Esophagus muscularis mucosa (tissue), 4 donors: ENCODE measurements at regions of chr6 and their contacts with region 1.

Region 1: GRCh38 chr6:73520688-73521350 is at the start of gene EEF1A1:
- DNase-seq: peak; percentile 100
- H3K4me3 ChIP-seq: peak within 1 kb of the TSS; percentile 70 to 96 (median 89)
- H3K27ac ChIP-seq: peak within 1 kb of the TSS; percentile 97 to 98 (median 98)
- H3K4me1 ChIP-seq: peaks cover 35 to 65% (median 58%) of the 10 kb centered on the region in 4 donors
- H3K27me3 ChIP-seq: peaks cover 0 to 5% (median 0%) of the 10 kb centered on the region in 4 donors
- CTCF ChIP-seq: peak in 1 of 3 experiments; percentile 16
- EP300 ChIP-seq: peak; percentile 80
- POLR2A ChIP-seq: peak; percentile 100
- total RNA-seq, gene EEF1A1: 6,828 to 12,822 (median 11,636) TPM

Region 2: DNA sequence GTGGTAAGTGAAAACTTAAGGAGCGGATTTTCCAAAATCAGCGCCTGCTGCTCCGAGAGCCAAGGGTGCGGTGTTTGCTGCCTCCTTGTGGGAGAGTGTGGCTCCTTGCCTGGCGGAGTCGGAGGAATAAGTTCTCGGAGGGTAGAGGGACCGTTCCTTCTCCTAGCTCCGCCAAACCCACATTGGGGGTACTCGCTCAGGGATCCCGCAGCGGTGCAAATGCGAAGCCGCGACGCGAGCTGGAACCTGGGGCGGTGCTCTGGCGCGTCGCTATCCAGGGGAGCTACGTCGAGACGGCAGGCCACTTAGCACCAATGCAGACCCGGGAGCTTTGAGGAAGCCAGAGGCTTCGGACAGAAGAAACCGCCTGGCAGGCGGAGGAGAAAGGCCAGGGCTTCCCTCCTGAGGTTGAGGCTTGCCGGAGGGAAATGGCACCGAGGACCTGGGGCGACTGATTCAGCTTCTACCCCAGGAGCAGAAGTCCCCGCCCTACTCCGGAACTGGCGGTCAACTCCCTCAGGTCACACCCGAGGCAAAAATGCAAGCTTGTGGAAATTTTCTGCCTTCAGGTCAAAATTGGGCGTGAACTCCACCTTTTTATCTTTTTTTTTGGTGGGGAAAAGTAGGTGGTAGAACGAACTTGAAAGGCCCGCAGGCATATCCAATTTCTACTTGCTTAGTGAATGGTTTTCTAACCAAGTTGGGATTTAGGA is 131.9 kb before region 1 on chr6:
- intact Hi-C with region 1: no loop called
- DNase-seq: no peak
- H3K4me3 ChIP-seq: peak overlapping the region; percentile 51 to 64 (median 56)
- H3K27ac ChIP-seq: peak overlapping the region; percentile 42 to 64 (median 48)
- H3K4me1 ChIP-seq: peaks cover 3 to 11% (median 9%) of the 10 kb centered on the region in 4 donors
- H3K27me3 ChIP-seq: no peaks in the 10 kb centered on the region
- CTCF ChIP-seq: peak; percentile 39 to 67 (median 41)
- EP300 ChIP-seq: no peak
- POLR2A ChIP-seq: no peak

Region 3: DNA sequence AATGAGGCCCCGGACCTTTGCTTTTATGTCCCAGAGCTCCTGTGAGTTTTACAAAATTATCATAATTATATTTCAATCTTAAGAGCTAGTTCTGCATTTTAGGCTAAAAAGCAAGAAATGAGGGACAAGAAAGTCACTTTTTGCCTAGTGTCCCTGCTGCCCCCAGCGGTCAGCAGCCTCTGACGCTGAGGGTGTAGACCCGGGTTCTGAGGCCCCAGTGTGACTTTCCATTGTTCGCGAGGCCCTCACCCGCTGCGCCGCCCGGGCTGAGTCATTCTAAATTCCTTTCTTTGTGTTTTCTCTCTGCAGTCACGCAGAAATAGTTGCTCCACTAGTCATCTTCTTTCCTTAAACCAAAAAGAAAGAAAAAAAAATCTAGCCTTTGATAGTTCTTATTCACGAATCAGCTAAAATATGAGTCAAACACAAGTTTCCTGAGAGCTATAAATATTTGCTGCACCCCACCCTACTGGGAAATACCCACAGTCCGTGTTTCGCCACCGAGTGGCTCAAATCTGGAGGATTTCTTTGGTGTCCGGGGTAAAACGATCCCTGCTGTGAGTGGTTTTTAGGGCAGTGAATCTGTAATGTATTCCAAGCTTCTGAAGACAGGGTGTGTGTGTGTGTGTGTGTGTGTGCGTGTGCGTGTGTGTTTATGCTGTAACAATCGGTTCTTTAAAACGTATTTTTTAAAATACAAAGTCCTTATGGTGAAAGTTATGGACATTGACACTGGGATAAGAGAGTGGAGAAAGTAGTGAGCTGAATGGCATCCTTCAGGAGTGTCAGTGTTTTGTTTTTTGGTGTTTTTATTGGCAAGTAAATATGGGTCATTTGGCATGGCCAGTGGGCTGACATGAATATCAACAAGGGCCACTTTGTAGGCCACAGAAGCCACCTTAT is 59.7 kb after region 1 on chr6:
- intact Hi-C with region 1: loop called (anchors 2 kb)
- DNase-seq: peak; percentile 96
- H3K4me3 ChIP-seq: peak overlapping the region; percentile 32 to 48 (median 41)
- H3K27ac ChIP-seq: peak overlapping the region; percentile 89 to 94 (median 92)
- H3K4me1 ChIP-seq: peaks cover 25 to 46% (median 40%) of the 10 kb centered on the region in 4 donors
- H3K27me3 ChIP-seq: no peaks in the 10 kb centered on the region
- CTCF ChIP-seq: peak; percentile 25 to 54 (median 38)
- EP300 ChIP-seq: no peak
- POLR2A ChIP-seq: peak; percentile 10

Region 4: DNA sequence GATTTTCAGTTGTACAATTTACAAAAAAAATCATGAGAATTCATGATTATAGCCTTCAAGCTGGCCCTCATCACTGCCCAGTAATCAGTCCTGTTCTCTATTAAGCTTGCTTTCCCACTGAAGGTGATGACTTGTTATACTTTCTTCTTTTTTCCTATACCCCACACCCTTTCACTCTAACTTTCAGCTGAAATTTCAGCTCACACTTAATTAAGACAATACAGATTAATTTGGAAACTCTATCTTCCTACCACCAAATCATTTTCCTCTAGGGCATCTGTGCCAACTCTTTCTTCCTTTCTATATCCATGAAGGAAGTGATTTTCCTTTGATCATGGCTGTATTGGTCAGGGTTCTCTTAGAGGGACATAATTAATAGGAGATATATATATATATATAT is 625.1 kb after region 1 on chr6:
- intact Hi-C with region 1: no loop called
- DNase-seq: no peak
- H3K4me3 ChIP-seq: no peak overlapping the region
- H3K27ac ChIP-seq: no peak overlapping the region
- H3K4me1 ChIP-seq: no peaks in the 10 kb centered on the region
- H3K27me3 ChIP-seq: no peaks in the 10 kb centered on the region
- CTCF ChIP-seq: no peak
- EP300 ChIP-seq: no peak
- POLR2A ChIP-seq: no peak